Lower leg skin (tissue), 4 donors: ENCODE measurements at regions of chr9 and their contacts with region 1.

Region 1: DNA sequence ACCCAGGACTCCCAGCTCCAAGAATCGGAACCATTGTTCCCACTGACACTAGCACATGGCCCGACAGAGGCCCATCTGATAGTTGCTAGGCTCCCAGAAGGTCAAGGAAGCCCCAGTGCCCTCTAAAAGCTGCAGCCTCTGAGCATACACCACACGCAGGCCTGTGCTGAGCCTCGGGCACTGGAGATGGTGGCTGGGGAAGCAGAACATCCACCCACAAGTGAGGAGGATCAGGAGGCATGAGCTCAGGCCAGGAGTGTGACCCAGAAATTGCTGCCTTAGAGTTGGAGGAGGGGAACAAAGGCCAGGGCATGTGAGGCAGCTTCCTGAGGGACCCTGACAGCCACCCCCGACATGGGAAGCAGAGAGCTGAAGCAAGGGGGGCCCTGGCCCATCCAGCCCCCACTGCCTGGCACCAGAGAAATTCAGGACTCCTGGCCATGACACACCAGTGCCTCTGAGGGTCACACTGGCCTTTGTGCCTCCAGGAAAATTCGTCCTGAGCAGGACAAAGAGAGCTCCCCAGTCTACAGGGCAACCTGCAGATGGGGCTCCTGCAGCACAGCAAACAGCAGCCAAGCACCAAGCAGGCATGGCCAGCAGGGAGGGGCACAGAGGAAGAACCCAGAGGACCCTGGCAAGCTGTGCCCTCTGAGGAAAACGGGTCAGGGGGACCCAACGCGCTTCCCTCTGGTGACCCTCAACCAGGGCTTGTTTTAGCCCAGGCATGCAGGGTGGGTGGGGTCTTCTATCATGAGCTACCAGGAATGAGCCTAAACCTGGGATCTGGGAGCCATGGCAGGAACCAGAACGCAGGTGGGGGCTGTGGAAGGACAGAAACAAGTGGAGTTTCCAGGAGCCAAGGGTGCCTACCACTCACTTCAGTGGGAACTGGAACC is 21.2 kb downstream of the IPPK start:
- DNase-seq: peak in 1 of 2 donors; percentile 77
- H3K4me3 ChIP-seq: no peak overlapping the region
- CTCF ChIP-seq: no peak
- POLR2A ChIP-seq: no peak

Region 2: GRCh38 chr9:91126761-91127445 is 1521.8 kb before region 1 on chr9:
- intact Hi-C with region 1: loop called (anchors 5 kb)
- DNase-seq: peak in 1 of 2 donors; percentile 48
- H3K4me3 ChIP-seq: no peak overlapping the region
- CTCF ChIP-seq: no peak
- POLR2A ChIP-seq: no peak

Region 3: GRCh38 chr9:92564504-92564903 is 84.2 kb before region 1 on chr9:
- intact Hi-C with region 1: no loop called
- DNase-seq: no peak
- H3K4me3 ChIP-seq: no peak overlapping the region
- CTCF ChIP-seq: no peak
- POLR2A ChIP-seq: no peak

Region 4: DNA sequence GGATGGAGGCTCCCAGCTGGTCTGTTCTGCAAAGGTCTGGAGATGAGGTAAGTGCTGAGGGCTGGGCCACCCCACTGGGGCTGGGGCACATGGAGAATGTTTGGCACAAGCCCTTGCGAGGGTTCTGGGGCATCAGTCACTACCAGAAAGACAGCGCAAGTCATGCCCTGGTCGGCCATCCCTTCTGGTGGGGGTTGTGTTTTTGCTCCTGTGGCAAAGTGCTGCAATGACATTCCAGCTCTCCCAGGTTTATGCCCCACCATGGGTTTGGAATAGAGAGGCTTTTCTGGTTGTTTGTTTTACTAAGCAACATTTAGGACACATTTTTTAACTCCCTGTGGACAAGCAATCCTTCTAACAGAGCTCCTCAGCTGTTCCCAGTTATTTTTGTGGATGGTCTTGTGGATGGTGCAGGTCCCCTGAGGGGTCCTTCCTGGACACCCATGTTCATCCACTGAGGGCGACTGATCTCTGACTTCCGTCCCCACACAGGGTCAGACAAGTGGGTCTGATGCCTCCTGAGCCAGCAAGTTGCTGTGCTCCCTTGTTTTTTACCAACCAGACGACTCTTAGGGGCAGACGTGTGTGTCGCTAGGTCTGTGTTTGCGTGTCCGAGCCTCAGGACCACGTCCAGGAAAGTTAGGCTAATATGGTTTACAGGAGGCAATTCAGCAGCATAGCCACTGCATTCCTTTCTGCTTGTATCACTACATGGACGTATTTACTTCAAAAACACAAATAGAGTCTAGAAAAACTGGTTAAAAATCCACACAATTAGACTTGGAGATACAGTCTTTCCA is 48.1 kb before region 1 on chr9:
- intact Hi-C with region 1: no loop called
- DNase-seq: peak; percentile 28 to 84
- H3K4me3 ChIP-seq: no peak overlapping the region
- CTCF ChIP-seq: no peak
- POLR2A ChIP-seq: no peak

Region 5: DNA sequence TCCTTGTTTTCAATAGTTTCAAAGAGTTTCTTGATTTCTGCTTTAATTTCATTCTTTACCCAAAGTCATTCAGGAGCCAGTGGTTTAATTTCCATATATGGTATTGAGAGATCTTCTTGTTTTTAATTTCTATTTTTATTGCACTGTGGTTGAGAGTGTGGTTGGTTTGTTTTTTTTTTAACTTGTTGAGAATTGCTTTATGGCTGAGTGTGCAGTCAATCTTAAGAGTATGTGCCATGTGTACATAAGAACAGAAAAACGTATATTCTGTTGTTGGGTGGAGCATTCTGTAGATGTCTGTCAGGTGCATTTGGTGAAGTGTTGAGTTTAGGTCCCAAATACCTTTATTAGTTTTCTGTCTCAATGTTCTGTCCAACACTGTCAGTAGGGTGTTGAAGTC is 47.9 kb after region 1 on chr9:
- intact Hi-C with region 1: no loop called
- DNase-seq: no peak
- H3K4me3 ChIP-seq: no peak overlapping the region
- CTCF ChIP-seq: no peak
- POLR2A ChIP-seq: no peak

Region 6: GRCh38 chr9:92963831-92964626 is 315.3 kb after region 1 on chr9:
- intact Hi-C with region 1: no loop called
- DNase-seq: peak in 1 of 2 donors; percentile 87
- H3K4me3 ChIP-seq: no peak overlapping the region
- CTCF ChIP-seq: no peak
- POLR2A ChIP-seq: no peak